Mammary epithelial cell (primary cell): ENCODE measurements at regions of chr5 and their contacts with region 1.

Region 1: DNA sequence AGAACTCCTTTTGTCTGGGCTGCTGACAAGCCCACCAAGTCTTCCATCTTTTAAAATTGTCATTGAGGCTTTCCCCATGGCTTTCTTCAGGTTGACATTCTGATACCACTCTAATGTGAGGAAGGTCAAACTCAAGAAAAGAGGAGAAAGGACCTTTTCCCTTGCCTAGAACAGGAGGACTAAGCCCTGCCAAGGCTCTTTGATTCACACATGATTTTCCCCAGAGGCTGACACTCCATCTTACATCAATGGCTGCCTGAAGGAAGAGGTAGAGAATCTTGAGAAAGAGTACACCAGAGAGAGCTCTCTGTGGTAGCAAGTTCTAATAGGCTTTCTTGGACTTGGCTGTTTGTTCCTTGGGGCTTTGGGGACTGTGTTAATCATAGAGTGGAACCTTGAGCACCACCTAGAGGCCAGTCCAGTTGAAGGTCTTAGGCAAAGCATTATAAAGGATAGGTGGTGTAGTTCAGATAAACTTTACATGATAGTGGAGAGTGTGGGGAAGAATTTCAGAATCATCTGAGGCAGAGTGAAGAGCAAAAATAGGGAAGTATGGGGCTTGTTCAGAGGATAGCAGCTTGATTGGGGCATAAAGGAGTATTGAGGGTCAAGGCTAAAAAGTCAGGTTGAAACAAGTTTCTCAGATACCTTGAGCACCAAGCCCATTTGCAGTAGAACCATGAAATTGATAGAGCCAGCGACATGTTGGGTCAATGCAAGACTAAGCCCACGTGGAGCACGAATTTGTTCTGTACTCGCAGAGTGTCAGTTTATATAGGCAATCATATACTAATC is 36.7 kb downstream of the NDFIP1 start:
- DNase-seq: peak; percentile 47
- H3K4me3 ChIP-seq: no peak overlapping the region
- H3K27ac ChIP-seq: no peak overlapping the region
- H3K4me1 ChIP-seq: no peaks in the 10 kb centered on the region
- H3K27me3 ChIP-seq: no peaks in the 10 kb centered on the region
- CTCF ChIP-seq: peak; percentile 80 to 88

Region 2: GRCh38 chr5:141465351-141465750 is 680.0 kb before region 1 on chr5:
- CTCF ChIA-PET with region 1: no interaction called
- dilution Hi-C with region 1: no loop called
- in situ Hi-C with region 1: no loop called
- intact Hi-C with region 1: no loop called
- DNase-seq: no peak
- H3K4me3 ChIP-seq: no peak overlapping the region
- H3K27ac ChIP-seq: no peak overlapping the region
- H3K4me1 ChIP-seq: no peaks in the 10 kb centered on the region
- H3K27me3 ChIP-seq: no peaks in the 10 kb centered on the region
- CTCF ChIP-seq: no peak

Region 3: GRCh38 chr5:141889282-141889871 is 255.9 kb before region 1 on chr5:
- CTCF ChIA-PET with region 1: no interaction called
- dilution Hi-C with region 1: no loop called
- in situ Hi-C with region 1: no loop called
- intact Hi-C with region 1: loop called (anchors 5 kb)
- DNase-seq: no peak
- H3K4me3 ChIP-seq: no peak overlapping the region
- H3K27ac ChIP-seq: no peak overlapping the region
- H3K4me1 ChIP-seq: no peaks in the 10 kb centered on the region
- H3K27me3 ChIP-seq: no peaks in the 10 kb centered on the region
- CTCF ChIP-seq: peak; percentile 33 to 69

Region 4: GRCh38 chr5:141968914-141969608 is 176.2 kb before region 1 on chr5 and contains the start of gene RNF14:
- CTCF ChIA-PET with region 1: no interaction called
- dilution Hi-C with region 1: no loop called
- in situ Hi-C with region 1: no loop called
- intact Hi-C with region 1: loop called (anchors 1 kb)
- DNase-seq: peak; percentile 93
- H3K4me3 ChIP-seq: peak within 1 kb of the TSS; percentile 48 to 87 (median 67)
- H3K27ac ChIP-seq: peak within 1 kb of the TSS; percentile 77
- H3K4me1 ChIP-seq: peaks cover 16% of the 10 kb centered on the region
- H3K27me3 ChIP-seq: no peaks in the 10 kb centered on the region
- CTCF ChIP-seq: peak; percentile 72 to 88
- total RNA-seq, gene RNF14: 60.4 to 93.7 TPM

Region 5: GRCh38 chr5:141992349-141992963 is 152.8 kb before region 1 on chr5:
- CTCF ChIA-PET with region 1: no interaction called
- dilution Hi-C with region 1: no loop called
- in situ Hi-C with region 1: loop called in 1 of 2 experiments (anchors 5 kb)
- intact Hi-C with region 1: loop called (anchors 1 kb)
- DNase-seq: peak; percentile 49
- H3K4me3 ChIP-seq: no peak overlapping the region
- H3K27ac ChIP-seq: no peak overlapping the region
- H3K4me1 ChIP-seq: no peaks in the 10 kb centered on the region
- H3K27me3 ChIP-seq: no peaks in the 10 kb centered on the region
- CTCF ChIP-seq: peak; percentile 60 to 67

Region 6: GRCh38 chr5:142000703-142001484 is 144.4 kb before region 1 on chr5:
- CTCF ChIA-PET with region 1: no interaction called
- dilution Hi-C with region 1: no loop called
- in situ Hi-C with region 1: loop called in 1 of 2 experiments (anchors 5 kb)
- intact Hi-C with region 1: no loop called
- DNase-seq: no peak
- H3K4me3 ChIP-seq: no peak overlapping the region
- H3K27ac ChIP-seq: no peak overlapping the region
- H3K4me1 ChIP-seq: peaks cover 17% of the 10 kb centered on the region
- H3K27me3 ChIP-seq: no peaks in the 10 kb centered on the region
- CTCF ChIP-seq: peak; percentile 27 to 40

Region 7: DNA sequence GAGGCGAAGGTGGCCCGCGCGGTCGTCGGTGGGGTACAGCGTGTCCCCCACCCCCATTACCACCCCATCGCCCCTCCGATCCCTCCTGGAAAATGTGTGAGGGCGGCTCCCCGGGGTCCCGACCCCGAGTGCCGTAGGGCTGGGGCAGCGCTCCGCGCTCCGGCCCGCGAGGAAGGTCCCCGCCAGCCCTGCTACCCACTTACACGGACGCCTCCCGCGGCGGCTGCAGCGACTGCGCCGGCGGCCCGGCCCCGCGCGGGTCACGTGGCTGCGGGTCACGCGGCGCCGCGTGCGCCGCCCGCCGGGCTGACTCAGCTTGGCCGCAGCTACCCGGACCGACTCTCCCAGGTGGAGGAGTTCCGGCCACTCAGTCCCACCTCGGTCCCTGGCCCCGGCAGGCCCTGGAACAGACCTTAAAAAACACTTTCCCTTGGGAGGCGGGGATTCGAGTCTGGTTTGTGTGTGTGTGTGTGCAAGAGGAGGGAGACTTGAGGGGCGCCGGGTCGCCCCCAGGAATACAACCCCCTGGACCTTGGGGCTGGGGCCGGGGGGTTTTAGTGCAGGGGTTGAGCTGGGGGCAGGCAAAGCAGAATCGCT is 132.4 kb before region 1 on chr5 and contains the start of gene GNPDA1:
- CTCF ChIA-PET with region 1: no interaction called
- dilution Hi-C with region 1: no loop called
- in situ Hi-C with region 1: no loop called
- intact Hi-C with region 1: loop called (anchors 1 kb)
- DNase-seq: peak; percentile 71
- H3K4me3 ChIP-seq: peak within 1 kb of the TSS; percentile 69 to 84 (median 69)
- H3K27ac ChIP-seq: peak within 1 kb of the TSS; percentile 53
- H3K4me1 ChIP-seq: peaks cover 31% of the 10 kb centered on the region
- H3K27me3 ChIP-seq: no peaks in the 10 kb centered on the region
- CTCF ChIP-seq: no peak
- total RNA-seq, gene GNPDA1: 29.0 to 77.2 TPM

Region 8: GRCh38 chr5:142108432-142109330 is 36.6 kb before region 1 on chr5 and contains the start of gene NDFIP1:
- CTCF ChIA-PET with region 1: no interaction called
- dilution Hi-C with region 1: no loop called
- in situ Hi-C with region 1: no loop called
- intact Hi-C with region 1: loop called (anchors 2 kb)
- DNase-seq: peak; percentile 83
- H3K4me3 ChIP-seq: peak within 1 kb of the TSS; percentile 74 to 84 (median 78)
- H3K27ac ChIP-seq: peak within 1 kb of the TSS; percentile 80
- H3K4me1 ChIP-seq: peaks cover 14% of the 10 kb centered on the region
- H3K27me3 ChIP-seq: no peaks in the 10 kb centered on the region
- CTCF ChIP-seq: no peak
- total RNA-seq, gene NDFIP1: 40.4 to 120 TPM

Region 9: DNA sequence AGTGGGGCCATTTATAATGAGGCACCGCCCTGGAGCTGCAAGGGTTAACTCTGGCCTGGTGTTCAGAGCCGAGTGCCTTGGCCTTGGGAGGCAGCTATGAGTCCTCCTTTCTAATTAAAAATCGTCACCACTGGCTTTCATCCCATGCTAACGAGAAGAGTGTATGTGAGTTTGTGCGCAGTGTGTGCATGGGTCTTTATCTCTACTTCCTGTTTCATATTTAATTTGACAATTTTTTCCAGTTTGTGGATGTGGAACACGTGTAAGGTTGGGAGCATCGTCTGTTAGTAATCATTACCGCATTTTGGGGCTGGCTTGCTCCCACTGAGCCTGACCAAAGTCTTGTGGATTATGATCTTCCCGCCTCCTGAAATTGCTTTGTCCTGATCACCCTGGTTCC is 39.7 kb after region 1 on chr5:
- CTCF ChIA-PET with region 1: no interaction called
- dilution Hi-C with region 1: no loop called
- in situ Hi-C with region 1: no loop called
- intact Hi-C with region 1: no loop called
- DNase-seq: no peak
- H3K4me3 ChIP-seq: no peak overlapping the region
- H3K27ac ChIP-seq: no peak overlapping the region
- H3K4me1 ChIP-seq: peaks cover 2% of the 10 kb centered on the region
- H3K27me3 ChIP-seq: no peaks in the 10 kb centered on the region
- CTCF ChIP-seq: no peak